Right ventricle myocardium inferior (tissue), 1 donor: ENCODE measurements at regions of chr12 and their contacts with region 1.

Region 1: GRCh38 chr12:124694846-124695497 is 127.6 kb upstream of the NCOR2 start:
- DNase-seq: peak; percentile 86
- ATAC-seq: peak; percentile 53

Region 2: GRCh38 chr12:124453419-124454351 is 241.3 kb before region 1 on chr12:
- intact Hi-C with region 1: no loop called
- DNase-seq: peak; percentile 91
- ATAC-seq: peak; percentile 75

Region 3: GRCh38 chr12:124625867-124626675 is 68.9 kb before region 1 on chr12:
- intact Hi-C with region 1: loop called (anchors 5 kb)
- DNase-seq: peak; percentile 94
- ATAC-seq: peak; percentile 87

Region 4: DNA sequence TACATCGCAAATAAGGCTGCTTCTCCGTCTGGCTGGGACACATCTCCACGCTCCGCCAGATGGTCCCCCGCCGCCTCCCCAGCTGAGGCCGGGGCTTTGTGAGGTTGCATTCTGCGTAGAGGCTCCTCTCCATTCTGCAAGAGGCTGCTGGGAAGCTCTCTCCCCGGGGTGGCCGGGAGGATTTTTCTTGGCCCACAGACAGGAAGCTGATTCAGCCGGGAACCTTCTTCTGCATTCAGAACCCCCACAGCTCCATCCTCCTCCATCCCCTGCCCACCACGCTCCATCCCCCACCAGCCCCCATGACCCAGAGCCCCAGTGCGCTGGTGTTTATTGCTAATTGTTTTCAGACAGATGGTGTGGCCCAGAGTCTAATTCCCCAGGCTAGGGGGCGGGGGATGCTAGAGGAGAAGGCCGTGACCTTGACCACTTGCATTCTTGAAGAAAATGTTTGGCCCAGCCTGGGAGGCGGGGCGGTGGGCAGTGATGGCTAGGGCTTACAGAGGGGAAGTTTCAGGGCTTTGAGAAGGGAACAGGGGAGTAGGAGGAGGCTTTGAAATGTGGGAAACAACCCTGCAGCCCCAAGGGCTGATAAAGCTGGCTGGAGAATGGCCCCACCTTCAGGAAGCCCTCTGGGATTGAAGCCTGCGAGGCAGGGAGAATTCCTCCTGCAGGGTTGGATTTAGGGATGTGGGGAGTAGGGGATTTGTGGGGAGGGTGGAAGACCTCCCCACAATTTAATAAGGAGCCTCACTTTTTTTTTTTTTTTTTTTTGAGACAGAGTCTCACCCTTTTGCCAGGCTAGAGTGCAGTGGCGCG is 39.1 kb before region 1 on chr12:
- intact Hi-C with region 1: loop called (anchors 5 kb)
- DNase-seq: peak; percentile 92
- ATAC-seq: peak; percentile 80

Region 5: GRCh38 chr12:124740691-124741137 is 45.7 kb after region 1 on chr12:
- intact Hi-C with region 1: loop called (anchors 5 kb)
- DNase-seq: peak; percentile 45
- ATAC-seq: no peak